WTC11 (cell line): ENCODE measurements at regions of chr12 and their contacts with region 1.

Region 1: GRCh38 chr12:20716037-20716436 is 20.9 kb downstream of the SLCO1C1 start:
- DNase-seq: peak; percentile 23
- ATAC-seq: peak; percentile 99
- H3K4me3 Mint-ChIP-seq: no peak overlapping the region
- H3K27ac Mint-ChIP-seq: no peak overlapping the region
- H3K4me1 Mint-ChIP-seq: peaks cover 8% of the 10 kb centered on the region
- H3K27me3 Mint-ChIP-seq: no peaks in the 10 kb centered on the region; the same call in 1 of the 2 replicates
- CTCF ChIP-seq: no peak

Region 2: DNA sequence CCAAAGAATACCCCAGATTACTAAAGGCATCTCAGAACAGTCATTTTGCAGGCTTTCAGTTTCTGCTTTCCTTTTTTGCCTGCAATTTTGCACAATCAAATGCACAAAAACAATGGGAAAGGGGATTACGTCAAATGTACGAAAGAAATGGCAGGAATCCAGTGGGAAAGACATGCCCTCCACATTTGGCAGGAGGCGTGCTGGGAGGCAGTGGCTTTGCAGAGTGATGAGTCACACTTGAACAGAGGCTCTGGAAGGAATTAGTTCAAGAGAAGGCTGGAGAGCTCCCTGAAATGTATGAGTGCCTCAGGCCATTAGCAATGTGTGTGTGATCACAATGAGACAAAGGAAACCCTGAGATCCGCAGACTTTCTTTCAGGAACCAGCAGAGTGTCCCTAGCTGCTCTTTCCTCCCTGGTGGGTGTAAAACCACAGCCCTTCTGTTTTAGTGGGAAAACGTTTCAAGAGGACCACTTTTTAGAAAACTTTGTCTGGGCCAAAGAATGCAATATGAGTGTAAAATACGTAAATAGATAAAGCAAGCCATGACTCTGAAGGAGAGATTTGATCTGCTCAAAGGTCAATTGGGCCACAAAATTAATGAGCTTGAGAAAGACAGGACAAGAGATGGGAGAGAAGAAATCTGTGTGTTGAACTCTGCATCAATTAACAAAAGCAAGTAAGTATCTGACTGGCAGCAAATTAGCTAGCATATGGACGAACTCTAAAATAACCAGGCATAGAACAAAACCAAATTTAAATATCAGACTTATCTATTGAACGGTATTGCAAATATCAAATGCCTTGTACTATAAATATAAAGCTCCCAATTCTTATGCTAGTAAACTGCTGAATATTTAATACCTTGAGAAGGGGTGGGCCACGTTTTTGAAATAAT is 503.1 kb before region 1 on chr12:
- CTCF ChIA-PET with region 1: no interaction called
- POLR2A ChIA-PET with region 1: no interaction called
- DNase-seq: peak; percentile 56
- ATAC-seq: peak; percentile 100
- H3K4me3 Mint-ChIP-seq: 0 out of 2 replicates have a peak overlapping the region, but pooled peaks have one; percentile 1
- H3K27ac Mint-ChIP-seq: peak overlapping the region; percentile 86
- H3K4me1 Mint-ChIP-seq: peaks cover 18% of the 10 kb centered on the region
- H3K27me3 Mint-ChIP-seq: no peaks in the 10 kb centered on the region
- CTCF ChIP-seq: no peak

Region 3: DNA sequence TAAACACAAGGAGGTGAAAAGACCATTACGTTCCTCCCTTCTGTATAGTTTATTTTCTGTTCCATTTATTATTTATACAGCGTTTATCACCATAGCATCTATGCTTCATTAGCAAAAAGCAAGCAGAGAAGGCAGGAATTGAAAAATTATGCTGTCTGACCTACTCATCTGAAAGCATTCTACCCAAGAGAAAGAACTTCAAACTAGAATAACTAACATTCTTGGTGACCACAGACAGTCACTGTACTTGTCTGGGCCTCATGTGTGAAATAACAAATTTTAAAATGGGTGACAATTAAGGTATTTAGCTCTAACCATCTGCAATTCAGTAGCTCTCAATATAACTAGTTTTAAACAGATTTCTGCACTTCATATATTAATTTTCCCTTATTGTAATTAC is 377.0 kb before region 1 on chr12:
- CTCF ChIA-PET with region 1: no interaction called
- POLR2A ChIA-PET with region 1: no interaction called
- DNase-seq: no peak
- ATAC-seq: no peak
- H3K4me3 Mint-ChIP-seq: no peak overlapping the region
- H3K27ac Mint-ChIP-seq: no peak overlapping the region
- H3K4me1 Mint-ChIP-seq: no peaks in the 10 kb centered on the region
- H3K27me3 Mint-ChIP-seq: no peaks in the 10 kb centered on the region
- CTCF ChIP-seq: no peak

Region 4: DNA sequence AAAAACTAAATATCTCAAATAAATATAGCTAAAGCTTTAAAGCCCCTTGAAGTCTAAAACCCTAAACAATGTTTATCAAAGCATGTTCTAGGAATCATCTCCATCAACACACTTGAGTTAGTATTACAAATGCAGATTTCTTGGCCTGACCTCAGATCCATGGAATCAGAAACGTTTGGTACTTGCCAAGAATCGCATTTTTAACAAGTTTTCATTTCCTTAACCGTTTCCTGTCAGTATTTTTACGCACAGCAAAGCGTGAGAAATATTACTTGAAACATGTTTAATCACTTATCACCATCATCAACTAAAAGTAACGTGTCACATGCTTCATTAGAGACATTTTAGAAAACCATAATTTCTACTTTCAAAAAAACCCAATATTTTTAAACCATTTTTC is 11.2 kb before region 1 on chr12:
- CTCF ChIA-PET with region 1: interaction called, 10 read pairs
- POLR2A ChIA-PET with region 1: no interaction called
- DNase-seq: no peak
- ATAC-seq: no peak
- H3K4me3 Mint-ChIP-seq: no peak overlapping the region
- H3K27ac Mint-ChIP-seq: no peak overlapping the region
- H3K4me1 Mint-ChIP-seq: peaks cover 3% of the 10 kb centered on the region
- H3K27me3 Mint-ChIP-seq: no peaks in the 10 kb centered on the region
- CTCF ChIP-seq: no peak

Region 5: GRCh38 chr12:20798561-20798960 is 82.5 kb after region 1 on chr12:
- CTCF ChIA-PET with region 1: interaction called, 13 read pairs
- POLR2A ChIA-PET with region 1: no interaction called
- DNase-seq: no peak
- ATAC-seq: peak; percentile 80
- H3K4me3 Mint-ChIP-seq: no peak overlapping the region
- H3K27ac Mint-ChIP-seq: no peak overlapping the region
- H3K4me1 Mint-ChIP-seq: no peaks in the 10 kb centered on the region; the same call in 1 of the 2 replicates
- H3K27me3 Mint-ChIP-seq: no peaks in the 10 kb centered on the region
- CTCF ChIP-seq: peak; percentile 33; the same call in 1 of the 2 replicates